Activated CD4-positive, alpha-beta memory T cell treated with anti-CD3 and anti-CD28 coated beads for 36 hours (primary cell): ENCODE measurements at regions of chr10 and their contacts with region 1.

Region 1: DNA sequence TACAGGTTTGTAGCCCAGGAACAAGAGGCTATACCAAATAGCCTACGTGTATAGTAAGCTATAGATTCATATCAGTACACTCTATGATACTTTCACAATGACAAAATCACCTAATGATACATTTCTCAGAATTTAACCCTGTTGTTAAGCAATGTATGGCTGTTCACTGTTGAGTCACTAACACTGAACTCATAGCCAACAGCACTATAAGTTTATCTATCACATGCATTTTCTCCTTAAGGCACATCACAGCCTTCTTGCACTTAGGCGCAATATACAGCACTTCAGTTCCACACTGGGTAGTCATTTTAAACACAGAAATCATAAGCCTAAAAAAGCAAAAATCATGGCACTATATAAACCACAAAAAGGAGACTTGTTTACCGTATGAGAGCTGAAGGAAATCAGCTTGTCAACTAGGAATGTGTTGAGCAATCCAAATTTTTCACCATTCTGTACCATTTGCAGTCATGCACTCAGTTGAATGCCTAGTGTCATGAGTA is 45.6 kb downstream of the ZNF438 start:
- DNase-seq: no peak
- H3K4me3 Mint-ChIP-seq: no peak overlapping the region
- H3K27ac Mint-ChIP-seq: peak overlapping the region; percentile 76
- H3K4me1 Mint-ChIP-seq: peaks cover 15% of the 10 kb centered on the region
- H3K27me3 Mint-ChIP-seq: no peaks in the 10 kb centered on the region

Region 2: DNA sequence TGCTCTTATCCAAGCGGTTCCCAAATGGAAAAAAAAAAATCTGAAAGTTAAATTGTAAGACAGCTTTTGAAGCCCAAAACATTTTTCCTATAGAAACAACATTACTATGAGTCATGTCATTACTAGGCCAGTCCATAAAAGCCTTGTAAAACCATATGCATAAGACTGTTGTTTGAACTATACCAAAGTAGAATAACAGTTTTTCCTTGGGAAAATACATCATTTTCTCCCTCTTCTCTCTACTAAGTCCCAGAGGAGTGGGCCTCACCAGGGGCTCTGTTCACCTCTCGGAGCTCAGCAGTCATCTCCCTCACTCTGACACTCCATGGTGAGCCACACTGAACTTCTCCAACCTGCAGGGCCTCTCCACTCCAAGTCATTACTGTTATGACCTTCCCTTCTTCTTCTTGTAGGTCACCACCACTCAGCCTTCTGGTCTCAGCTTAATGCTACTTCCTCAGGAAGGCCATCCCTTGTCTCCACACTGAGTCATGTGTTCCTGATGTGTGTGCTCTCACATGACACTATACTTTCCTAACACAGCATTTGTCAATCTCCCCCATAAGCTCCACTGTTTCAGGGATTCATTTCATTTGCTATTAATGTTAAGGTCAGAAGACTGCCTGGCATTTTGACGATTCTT is 13.1 kb after region 1 on chr10:
- CTCF ChIA-PET with region 1: interaction called, 4 read pairs
- POLR2A ChIA-PET with region 1: interaction called, 10 read pairs
- intact Hi-C with region 1: loop called (anchors 1 kb)
- DNase-seq: peak; percentile 43
- H3K4me3 Mint-ChIP-seq: peak overlapping the region; percentile 56
- H3K27ac Mint-ChIP-seq: peak overlapping the region; percentile 71
- H3K4me1 Mint-ChIP-seq: peaks cover 41% of the 10 kb centered on the region
- H3K27me3 Mint-ChIP-seq: no peaks in the 10 kb centered on the region

Region 3: DNA sequence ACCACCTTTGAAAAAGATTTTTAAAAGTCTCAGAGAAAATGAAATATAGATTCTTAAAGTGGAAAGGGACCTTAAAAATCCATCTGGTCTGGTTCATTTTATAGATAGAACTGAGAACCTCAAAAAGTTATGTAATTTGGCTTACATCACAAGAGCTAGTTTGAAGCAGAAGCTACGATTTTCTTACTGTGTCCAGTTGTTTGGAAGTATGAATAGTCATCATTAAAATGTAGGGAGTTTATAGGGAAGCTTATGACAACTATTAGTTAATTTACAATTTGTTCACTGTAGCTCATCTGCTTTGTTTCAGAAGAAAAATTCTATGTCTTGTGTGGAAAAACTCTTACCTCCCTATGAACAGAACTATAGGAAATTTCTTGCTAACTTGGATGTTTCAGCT is 359.8 kb after region 1 on chr10:
- CTCF ChIA-PET with region 1: no interaction called
- POLR2A ChIA-PET with region 1: no interaction called
- intact Hi-C with region 1: loop called (anchors 5 kb)
- DNase-seq: no peak
- H3K4me3 Mint-ChIP-seq: no peak overlapping the region
- H3K27ac Mint-ChIP-seq: no peak overlapping the region
- H3K4me1 Mint-ChIP-seq: peaks cover 51% of the 10 kb centered on the region
- H3K27me3 Mint-ChIP-seq: no peaks in the 10 kb centered on the region